Activated CD4-positive, alpha-beta T cell treated with anti-CD3 and anti-CD28 coated beads for 36 hours (primary cell): ENCODE measurements at regions of chr6 and their contacts with region 1.

Region 1: DNA sequence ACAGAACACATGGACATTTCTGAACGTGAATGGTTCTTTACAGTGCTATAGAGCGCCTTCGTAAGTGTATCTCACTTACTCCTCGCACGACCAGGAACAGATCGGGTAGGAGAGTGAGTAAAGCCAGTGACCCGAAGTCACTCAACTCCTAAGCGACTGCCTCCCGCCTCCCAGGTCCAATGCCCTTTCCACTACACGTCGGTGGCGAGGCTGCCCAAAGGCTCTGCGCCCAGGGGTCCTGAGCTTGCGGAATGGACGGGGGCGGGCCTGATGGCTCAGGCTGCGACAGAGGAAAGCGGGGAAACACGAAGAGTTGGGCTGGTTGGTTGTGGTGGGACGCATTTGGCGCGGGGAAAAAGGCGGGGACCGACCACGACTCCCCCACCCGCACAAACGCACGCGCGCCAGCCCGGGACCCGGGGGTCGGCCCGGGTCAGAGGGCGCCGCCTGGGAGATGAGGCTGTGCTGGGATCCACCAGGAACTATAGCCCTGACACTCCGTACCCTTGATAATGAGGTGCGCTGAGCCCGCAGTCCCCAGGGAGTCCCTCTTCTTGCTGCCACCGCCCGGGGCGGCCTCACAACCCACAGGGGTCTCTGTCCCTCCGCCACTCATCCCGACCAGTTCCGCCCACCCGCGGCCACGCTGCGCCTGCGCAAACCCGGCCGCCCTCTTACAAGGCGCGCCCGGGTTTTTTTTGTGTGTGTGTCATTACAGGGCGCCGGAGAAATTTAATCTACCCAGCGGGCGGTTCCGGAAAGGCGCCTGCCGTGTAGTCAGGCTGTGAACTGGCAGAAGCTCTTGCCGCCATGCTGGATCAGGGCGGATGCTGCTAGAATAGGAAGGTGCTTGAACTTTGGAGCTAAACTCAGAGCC is at the start of gene BLOC1S5:
- DNase-seq: peak; percentile 98
- ATAC-seq: peak; percentile 89
- H3K4me3 Mint-ChIP-seq: peak within 1 kb of the TSS; percentile 90
- H3K27ac Mint-ChIP-seq: peak within 1 kb of the TSS; percentile 94
- H3K4me1 Mint-ChIP-seq: peaks cover 29% of the 10 kb centered on the region
- H3K27me3 Mint-ChIP-seq: no peaks in the 10 kb centered on the region
- total RNA-seq, gene BLOC1S5: 20.0 to 30.3 TPM

Region 2: GRCh38 chr6:7112741-7113313 is 951.2 kb before region 1 on chr6:
- CTCF ChIA-PET with region 1: no interaction called
- POLR2A ChIA-PET with region 1: no interaction called
- intact Hi-C with region 1: loop called in 1 of 2 experiments (anchors 10 kb)
- DNase-seq: peak; percentile 65
- ATAC-seq: peak; percentile 56
- H3K4me3 Mint-ChIP-seq: peak overlapping the region; percentile 72
- H3K27ac Mint-ChIP-seq: peak overlapping the region; percentile 77
- H3K4me1 Mint-ChIP-seq: peaks cover 75% of the 10 kb centered on the region
- H3K27me3 Mint-ChIP-seq: no peaks in the 10 kb centered on the region

Region 3: DNA sequence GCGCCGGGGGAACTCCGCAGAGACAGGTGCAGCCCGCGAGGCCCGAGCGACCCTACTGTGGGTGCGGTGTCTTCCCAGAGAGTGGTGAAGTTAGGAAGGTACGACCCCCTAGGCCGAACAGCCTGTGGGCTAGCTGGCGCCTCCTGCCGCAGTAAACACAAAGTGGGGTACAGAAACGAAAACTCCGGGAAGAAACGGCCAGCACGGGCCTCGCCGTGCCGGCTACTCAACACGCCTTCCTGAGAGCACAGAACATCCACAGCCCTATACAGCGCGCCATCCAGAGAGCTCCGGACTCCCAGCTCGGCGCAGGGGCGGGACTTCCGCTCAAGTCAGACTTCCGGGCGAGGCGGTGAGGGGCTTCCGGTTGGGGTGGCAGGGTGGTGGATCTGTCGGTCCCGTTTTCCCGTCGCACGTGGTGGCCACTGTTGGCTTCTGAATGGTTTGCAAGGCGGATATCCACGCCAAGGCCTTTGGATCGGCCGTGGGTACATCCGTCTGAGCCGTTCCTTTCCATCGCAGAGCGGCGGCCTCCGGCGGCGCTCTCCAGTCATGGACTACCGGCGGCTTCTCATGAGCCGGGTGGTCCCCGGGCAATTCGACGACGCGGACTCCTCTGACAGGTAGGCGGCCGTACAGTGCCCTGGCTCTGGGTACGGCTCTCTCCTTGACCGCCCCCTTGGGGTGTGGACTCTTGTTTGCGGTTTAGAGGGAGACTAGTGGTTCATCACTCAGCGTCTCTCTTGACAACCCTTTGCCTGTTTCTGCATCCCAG is 674.4 kb before region 1 on chr6 and contains the starts of genes CAGE1 and RIOK1:
- CTCF ChIA-PET with region 1: no interaction called
- POLR2A ChIA-PET with region 1: no interaction called
- intact Hi-C with region 1: loop called in 1 of 2 experiments (anchors 1 kb)
- DNase-seq: peak; percentile 97
- ATAC-seq: peak; percentile 96
- H3K4me3 Mint-ChIP-seq: peak within 1 kb of the TSS; percentile 88
- H3K27ac Mint-ChIP-seq: peak within 1 kb of the TSS; percentile 99
- H3K4me1 Mint-ChIP-seq: peaks cover 42% of the 10 kb centered on the region
- H3K27me3 Mint-ChIP-seq: no peaks in the 10 kb centered on the region
- total RNA-seq, gene CAGE1: 0.07 to 0.09 TPM
- total RNA-seq, gene RIOK1: 37.3 to 39.6 TPM

Region 4: GRCh38 chr6:7878401-7878964 is 185.5 kb before region 1 on chr6:
- CTCF ChIA-PET with region 1: no interaction called
- POLR2A ChIA-PET with region 1: no interaction called
- intact Hi-C with region 1: no loop called
- DNase-seq: no peak
- ATAC-seq: no peak
- H3K4me3 Mint-ChIP-seq: no peak overlapping the region
- H3K27ac Mint-ChIP-seq: no peak overlapping the region
- H3K4me1 Mint-ChIP-seq: no peaks in the 10 kb centered on the region
- H3K27me3 Mint-ChIP-seq: no peaks in the 10 kb centered on the region

Region 5: GRCh38 chr6:7910654-7911344 is 153.2 kb before region 1 on chr6 and contains the start of gene TXNDC5:
- CTCF ChIA-PET with region 1: interaction called, 4 read pairs
- POLR2A ChIA-PET with region 1: no interaction called
- intact Hi-C with region 1: loop called (anchors 1 kb)
- DNase-seq: peak; percentile 83
- ATAC-seq: peak; percentile 87
- H3K4me3 Mint-ChIP-seq: peak within 1 kb of the TSS; percentile 91
- H3K27ac Mint-ChIP-seq: peak within 1 kb of the TSS; percentile 76
- H3K4me1 Mint-ChIP-seq: peaks cover 15% of the 10 kb centered on the region
- H3K27me3 Mint-ChIP-seq: no peaks in the 10 kb centered on the region
- total RNA-seq, gene TXNDC5: 44.4 to 52.8 TPM

Region 6: DNA sequence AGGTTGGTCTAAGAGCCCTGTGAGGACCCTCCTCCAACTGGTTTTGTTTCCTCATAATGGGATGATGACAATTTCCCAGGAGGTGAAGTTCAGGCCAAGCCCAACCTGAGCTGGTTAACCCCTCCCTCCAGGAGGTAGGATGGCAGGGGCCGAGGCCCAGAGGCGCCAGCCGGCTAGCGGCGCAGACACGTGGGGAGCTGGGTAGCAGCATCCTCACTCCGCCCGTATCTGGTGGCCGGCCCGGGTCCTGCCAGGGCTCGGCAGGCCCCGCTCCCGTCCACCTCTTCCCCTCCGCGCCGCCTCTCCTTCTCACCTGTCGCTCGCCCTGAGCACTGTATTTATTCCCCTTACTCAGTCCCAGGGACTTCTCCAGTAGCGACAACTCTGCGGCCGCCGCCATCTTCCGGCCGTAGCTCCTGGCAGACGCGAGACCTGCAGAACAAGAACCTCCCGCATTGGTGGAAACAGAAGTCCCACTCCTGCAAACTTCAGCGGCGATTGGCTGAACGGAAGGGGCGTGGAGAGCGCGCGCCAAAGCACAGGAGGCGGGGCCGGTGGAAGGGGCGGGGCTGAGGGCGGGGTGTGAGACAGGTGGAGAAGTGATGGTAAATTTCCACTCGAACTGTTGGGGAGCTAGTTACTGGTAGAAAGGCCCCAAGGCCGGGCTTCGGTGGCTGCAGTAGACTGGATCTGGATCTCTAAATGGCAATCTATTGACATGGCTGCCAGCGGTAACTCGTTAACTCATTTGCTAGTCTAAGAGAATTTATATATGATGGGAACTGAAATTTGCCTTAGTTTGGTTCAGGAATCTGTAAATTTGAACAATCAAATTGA is 38.3 kb after region 1 on chr6 and contains the start of gene EEF1E1:
- CTCF ChIA-PET with region 1: interaction called, 7 read pairs
- POLR2A ChIA-PET with region 1: interaction called, 22 read pairs
- intact Hi-C with region 1: loop called (anchors 1 kb)
- DNase-seq: peak; percentile 99
- ATAC-seq: peak; percentile 98
- H3K4me3 Mint-ChIP-seq: peak within 1 kb of the TSS; percentile 88
- H3K27ac Mint-ChIP-seq: peak within 1 kb of the TSS; percentile 96
- H3K4me1 Mint-ChIP-seq: peaks cover 24% of the 10 kb centered on the region
- H3K27me3 Mint-ChIP-seq: peaks cover 15% of the 10 kb centered on the region
- total RNA-seq, gene EEF1E1: 73.4 to 74.6 TPM